ENCODE measurements at regions of chr5 and their contacts with region 1.

Region 1: DNA sequence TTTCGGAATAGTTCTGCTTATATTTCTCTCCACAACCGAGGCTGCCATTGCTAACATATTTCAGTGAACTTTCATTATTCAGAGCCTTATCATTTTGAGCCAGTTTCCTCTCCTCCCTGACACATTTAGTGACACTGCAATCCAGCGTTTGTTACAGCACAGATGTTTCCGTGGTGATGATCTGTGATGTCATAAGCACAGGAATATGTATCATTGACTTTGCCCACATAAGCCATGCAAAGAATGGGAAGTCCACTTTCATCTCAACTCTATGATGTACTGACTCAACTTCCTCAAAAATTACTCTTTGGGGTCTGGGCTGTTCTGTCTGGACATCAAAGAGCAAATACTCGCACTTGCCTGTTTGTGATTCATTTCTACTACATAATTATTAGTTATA is 291.8 kb downstream of the EBF1 start:
- DNase-seq: no peak
- ATAC-seq: no peak
- H3K4me3 ChIP-seq: no peak overlapping the region
- H3K27ac ChIP-seq: no peak overlapping the region
- H3K4me1 ChIP-seq: peaks cover 2 to 3% of the 10 kb centered on the region in 2 donors
- H3K27me3 ChIP-seq: no peaks in the 10 kb centered on the region

Region 2: DNA sequence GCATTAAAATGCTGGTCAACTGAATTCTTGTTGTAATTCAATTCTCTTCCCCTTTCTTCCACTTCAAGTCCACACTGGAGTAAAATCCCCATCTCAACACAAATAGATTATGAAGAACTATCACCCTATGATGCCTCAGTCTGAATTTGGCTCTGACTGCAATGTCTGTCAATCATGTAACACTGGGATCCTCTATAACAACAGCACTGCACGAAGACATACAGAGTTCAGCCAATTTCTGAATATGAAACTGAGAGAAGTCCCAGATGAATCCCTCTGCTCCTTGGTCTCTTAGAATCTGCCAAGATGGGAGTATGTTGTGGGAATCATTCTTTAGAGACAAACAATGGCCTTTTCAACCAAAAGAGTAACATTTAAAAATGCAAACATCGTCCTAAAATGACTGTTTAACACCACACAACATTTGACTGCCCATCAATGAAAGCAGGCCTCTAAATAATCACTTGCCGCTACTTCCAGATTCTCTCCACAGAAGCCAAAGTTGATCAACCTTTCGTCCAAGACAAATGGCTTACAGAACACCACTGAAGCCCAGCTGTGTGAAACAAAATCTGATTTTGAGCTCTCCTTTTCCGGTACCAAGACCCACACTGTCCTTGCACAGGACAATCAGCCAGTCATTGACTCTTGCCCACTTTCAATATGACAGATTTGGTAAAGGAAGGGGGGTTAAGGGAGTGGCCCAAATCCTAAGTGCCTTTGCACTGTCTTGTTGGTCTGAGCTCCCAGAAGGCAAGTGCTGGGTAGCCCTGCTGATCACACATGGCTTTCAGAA is 33.7 kb after region 1 on chr5:
- intact Hi-C with region 1: loop called in 1 of 2 experiments (anchors 5 kb)
- DNase-seq: no peak
- ATAC-seq: no peak
- H3K4me3 ChIP-seq: no peak overlapping the region
- H3K27ac ChIP-seq: no peak overlapping the region
- H3K4me1 ChIP-seq: peaks cover 2 to 7% of the 10 kb centered on the region in 2 donors
- H3K27me3 ChIP-seq: no peaks in the 10 kb centered on the region